MCF 10A (cell line): ENCODE measurements at regions of chr15 and their contacts with region 1.

Region 1: DNA sequence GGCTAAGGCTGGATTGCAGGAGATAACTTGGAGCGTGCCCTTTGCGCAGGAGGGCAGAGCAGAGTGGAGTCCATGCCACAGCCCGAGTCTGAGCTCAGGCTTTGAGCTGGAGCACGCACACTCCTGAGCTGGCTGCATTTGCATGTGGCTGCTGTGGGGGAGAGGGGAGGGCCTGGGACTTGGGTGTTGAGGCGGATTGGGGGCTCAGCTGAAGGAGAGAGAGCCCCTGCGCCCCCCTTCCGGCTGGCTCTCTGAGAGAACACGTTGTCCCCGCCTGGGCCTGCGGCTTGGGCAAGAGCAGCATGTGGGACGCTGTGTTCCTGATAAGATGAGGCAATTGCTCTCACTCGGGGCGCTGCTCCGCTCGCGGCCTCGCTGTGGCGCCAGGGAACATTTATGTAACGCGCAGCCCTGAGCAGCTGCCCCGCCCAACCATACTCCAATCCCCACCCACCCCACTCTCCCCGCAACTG is 39.1 kb downstream of the KLF13 start:
- DNase-seq: peak; percentile 92
- H3K4me3 Mint-ChIP-seq: peak overlapping the region; percentile 76
- H3K27ac Mint-ChIP-seq: peak overlapping the region; percentile 86
- H3K4me1 Mint-ChIP-seq: peaks cover 57% of the 10 kb centered on the region
- H3K27me3 Mint-ChIP-seq: no peaks in the 10 kb centered on the region
- CTCF ChIP-seq: peak; percentile 49

Region 2: DNA sequence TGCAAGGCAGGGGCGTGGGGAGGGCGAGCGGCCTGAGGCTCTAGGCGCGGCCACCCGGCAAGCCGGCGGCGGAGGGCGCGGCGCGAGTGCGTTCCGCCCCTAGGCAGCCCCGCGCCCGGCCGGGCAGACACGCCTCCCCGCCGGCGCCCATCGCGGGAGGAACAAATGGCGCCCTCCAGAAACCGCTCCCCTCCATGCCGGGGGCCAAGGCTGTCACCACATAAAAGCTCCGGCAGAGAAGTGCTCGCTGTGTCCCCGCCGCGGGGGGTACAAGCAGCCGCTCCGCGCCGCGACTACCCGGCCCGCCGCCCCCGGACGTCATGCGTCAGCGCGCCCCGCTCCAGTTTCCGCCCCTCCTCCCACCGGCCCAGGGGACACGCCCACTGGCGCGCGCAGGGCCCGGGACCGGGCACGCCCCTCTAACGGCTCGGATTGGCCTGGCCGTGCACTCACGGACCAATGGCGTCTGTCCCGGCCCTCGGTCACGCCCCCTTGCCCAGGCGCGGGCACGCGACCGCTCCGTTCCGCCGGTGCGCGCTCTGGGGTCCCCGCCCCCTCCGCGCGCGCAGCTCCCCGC is 39.4 kb before region 1 on chr15:
- CTCF ChIA-PET with region 1: interaction called, 13 read pairs
- POLR2A ChIA-PET with region 1: interaction called, 13 read pairs
- intact Hi-C with region 1: loop called (anchors 5 kb)
- DNase-seq: peak; percentile 97
- H3K4me3 Mint-ChIP-seq: peak overlapping the region; percentile 95
- H3K27ac Mint-ChIP-seq: no peak overlapping the region
- H3K4me1 Mint-ChIP-seq: peaks cover 19% of the 10 kb centered on the region
- H3K27me3 Mint-ChIP-seq: no peaks in the 10 kb centered on the region
- CTCF ChIP-seq: no peak

Region 3: DNA sequence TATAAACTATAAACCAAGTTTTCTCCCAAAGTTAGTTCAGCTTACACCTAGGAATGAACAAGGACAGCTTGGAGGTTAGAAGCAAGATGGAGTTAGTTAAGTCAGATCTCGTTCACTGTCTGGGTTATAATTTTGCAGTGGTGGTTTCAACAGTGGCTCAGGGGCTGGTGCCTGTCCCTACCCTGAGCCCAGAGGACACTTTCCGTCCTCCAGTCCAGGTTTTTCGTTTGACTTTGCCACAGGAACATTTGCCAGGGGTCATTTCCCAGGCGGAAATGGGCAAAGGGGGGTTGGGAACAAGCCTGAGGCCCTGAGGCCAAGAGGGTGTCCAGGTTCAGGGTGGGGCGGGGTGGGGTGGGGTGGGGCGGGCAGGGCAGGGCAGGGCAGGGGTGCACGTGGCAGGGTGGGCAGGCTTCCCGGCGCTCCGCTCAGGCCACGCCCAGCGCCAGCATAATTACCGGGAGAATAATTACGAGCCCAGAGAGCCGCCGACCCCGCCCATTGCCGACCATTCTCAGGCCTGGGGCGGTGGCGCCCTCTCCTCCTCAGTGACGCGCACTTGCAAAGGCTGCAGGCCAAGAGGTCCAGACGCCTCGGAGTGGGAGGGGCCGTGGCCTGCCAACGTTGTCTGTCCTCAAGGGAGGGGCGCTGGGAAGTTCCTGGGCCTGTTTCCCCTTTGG is 31.3 kb after region 1 on chr15:
- CTCF ChIA-PET with region 1: interaction called, 37 read pairs
- POLR2A ChIA-PET with region 1: interaction called, 34 read pairs
- intact Hi-C with region 1: no loop called
- DNase-seq: peak; percentile 96
- H3K4me3 Mint-ChIP-seq: no peak overlapping the region
- H3K27ac Mint-ChIP-seq: peak overlapping the region; percentile 87
- H3K4me1 Mint-ChIP-seq: peaks cover 44% of the 10 kb centered on the region
- H3K27me3 Mint-ChIP-seq: no peaks in the 10 kb centered on the region
- CTCF ChIP-seq: no peak

Region 4: DNA sequence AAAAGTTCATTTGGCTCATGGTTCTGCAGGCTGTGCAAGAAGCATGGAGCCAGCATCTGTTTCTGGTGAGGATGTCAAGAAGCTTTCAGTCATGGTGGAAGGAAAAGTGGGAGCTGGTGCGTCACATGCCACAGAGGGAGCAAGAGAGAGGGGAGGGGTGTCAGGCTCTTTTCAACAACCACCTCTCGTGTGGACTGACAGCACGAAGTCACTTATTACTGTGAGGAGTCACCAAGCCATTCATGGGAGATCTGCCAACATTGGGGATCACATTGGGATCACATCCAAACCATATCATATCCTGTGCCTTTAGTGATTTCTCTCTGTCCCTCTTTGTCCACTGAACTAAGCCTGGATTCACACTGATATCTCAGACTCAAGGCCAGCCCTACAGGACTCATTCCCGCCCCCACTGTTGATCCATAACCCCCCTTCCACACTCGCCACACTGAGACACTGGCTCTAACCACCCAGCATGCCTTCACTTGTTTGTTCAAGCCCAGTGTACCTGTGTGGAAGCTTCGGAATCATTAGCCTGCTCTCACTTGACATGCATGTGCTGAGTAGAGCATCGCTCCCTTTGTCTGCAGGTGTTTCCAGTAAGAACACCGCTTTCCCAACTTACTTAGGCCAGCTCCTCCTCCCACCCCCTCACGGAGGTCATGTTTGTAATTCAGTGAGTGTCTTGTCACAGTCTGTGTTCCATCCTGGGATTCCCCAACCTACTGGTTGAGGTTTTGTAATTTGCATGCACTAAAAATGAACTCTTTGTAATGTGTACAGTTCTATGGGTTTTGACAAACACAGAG is 93.1 kb after region 1 on chr15:
- CTCF ChIA-PET with region 1: interaction called, 19 read pairs
- POLR2A ChIA-PET with region 1: interaction called, 15 read pairs
- intact Hi-C with region 1: no loop called
- DNase-seq: peak; percentile 71
- H3K4me3 Mint-ChIP-seq: peak overlapping the region; percentile 1
- H3K27ac Mint-ChIP-seq: peak overlapping the region; percentile 57
- H3K4me1 Mint-ChIP-seq: peaks cover 24% of the 10 kb centered on the region
- H3K27me3 Mint-ChIP-seq: no peaks in the 10 kb centered on the region
- CTCF ChIP-seq: no peak

Region 5: DNA sequence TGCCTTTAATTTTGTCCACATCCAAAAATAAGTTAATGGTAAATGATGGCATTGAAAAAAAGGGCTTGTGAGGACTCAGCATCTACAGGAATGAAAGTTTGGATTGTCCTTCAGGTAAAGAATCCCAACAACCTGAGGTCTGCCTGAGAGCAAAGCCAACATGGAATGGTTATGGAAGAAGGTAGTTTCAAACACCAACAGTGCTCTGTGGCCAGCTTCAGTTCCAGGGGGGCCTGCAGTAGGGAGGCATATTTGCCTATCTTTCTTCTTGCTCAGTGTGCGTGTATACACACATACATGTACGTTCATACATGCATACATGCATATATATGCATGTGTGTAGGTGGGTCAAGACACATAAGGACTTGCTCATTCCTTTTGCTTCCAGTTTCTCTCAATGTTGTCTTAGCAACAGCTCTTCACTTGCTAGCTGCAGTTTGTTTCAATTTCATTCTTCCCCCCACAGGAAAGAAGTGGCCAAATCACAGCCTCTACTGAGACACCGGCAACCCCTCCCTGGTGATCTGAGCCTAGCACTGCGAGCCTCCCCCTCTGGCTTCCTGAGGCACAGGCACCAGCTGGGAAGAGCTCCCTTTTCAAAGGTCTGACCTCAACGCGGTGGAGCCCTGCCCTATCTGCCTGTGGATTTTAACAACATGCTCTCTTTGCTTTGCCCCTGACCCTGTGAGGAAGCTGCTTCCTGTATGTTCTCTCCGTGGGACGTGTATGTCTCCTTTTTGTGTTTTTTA is 107.1 kb after region 1 on chr15:
- CTCF ChIA-PET with region 1: interaction called, 11 read pairs
- POLR2A ChIA-PET with region 1: no interaction called
- intact Hi-C with region 1: no loop called
- DNase-seq: no peak
- H3K4me3 Mint-ChIP-seq: no peak overlapping the region
- H3K27ac Mint-ChIP-seq: no peak overlapping the region
- H3K4me1 Mint-ChIP-seq: peaks cover 18% of the 10 kb centered on the region
- H3K27me3 Mint-ChIP-seq: no peaks in the 10 kb centered on the region
- CTCF ChIP-seq: no peak